Heart right ventricle (tissue), 16 donors: ENCODE measurements at regions of chr10 and their contacts with region 1.

Region 1: GRCh38 chr10:71314028-71314693 is 4.9 kb upstream of the SLC29A3 start:
- DNase-seq: peak; percentile 48 to 51
- ATAC-seq: peak in 7 of 8 donors; percentile 48 to 77 (median 63)
- H3K4me3 ChIP-seq: peak overlapping the region in 3 of 10 donors; percentile 12 to 24 (median 17)
- H3K27ac ChIP-seq: peak overlapping the region in 1 of 10 donors; percentile 36
- H3K4me1 ChIP-seq: peaks cover 3 to 35% (median 25%) of the 10 kb centered on the region in 9 donors
- H3K27me3 ChIP-seq: no peaks in the 10 kb centered on the region
- CTCF ChIP-seq: peak; percentile 75 to 92 (median 89)

Region 2: GRCh38 chr10:71378336-71379117 is 64.4 kb after region 1 on chr10:
- intact Hi-C with region 1: loop called in 4 of 10 experiments (anchors 1 to 5 kb)
- DNase-seq: no peak
- ATAC-seq: no peak
- H3K4me3 ChIP-seq: no peak overlapping the region
- H3K27ac ChIP-seq: peak overlapping the region in 2 of 10 donors; percentile 64 to 90
- H3K4me1 ChIP-seq: peaks cover 0 to 37% (median 7%) of the 10 kb centered on the region in 9 donors
- H3K27me3 ChIP-seq: peaks cover 0 to 3% (median 0%) of the 10 kb centered on the region in 7 donors
- CTCF ChIP-seq: no peak

Region 3: DNA sequence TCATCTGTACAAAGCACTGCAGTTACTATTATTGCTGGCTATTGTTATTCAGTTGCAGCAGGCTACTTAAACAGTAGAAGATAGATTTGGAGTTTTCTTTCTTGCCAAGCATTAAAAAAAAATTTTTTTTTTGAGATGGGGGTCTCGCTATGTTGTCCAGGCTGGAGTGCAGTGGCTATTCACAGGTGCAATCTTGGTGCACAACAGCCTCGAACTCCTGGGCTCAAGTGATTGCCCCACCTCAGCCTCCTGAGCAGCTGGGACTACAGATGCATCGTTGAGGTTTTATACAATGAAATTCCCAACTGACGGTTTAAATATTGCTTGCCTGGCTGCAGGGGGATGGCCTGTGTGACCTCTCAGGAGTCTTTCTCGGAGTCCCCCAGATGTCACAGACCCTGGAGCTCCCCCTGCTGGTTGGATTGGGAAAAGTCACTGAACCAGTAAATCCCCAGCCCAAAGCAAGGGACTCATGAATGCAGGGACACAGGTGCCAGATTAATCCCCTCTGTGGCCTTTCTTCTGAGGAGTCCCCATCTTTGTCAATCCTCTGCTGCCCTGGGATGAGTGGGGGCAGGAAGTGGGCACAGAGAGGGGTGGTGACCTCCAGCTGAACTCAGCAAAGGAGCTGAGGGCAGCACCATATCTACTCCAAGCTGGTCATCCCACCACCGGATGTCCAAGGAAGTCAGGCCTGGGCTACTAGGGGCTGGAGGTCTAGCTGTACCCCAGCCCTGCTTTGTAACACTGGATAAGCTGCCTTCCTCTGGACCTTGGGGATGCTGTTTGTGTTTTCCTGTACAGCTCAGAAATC is 255.8 kb after region 1 on chr10:
- intact Hi-C with region 1: loop called in 7 of 10 experiments (anchors 2 to 10 kb)
- DNase-seq: peak; percentile 58 to 77
- ATAC-seq: peak in 7 of 8 donors; percentile 44 to 73 (median 68)
- H3K4me3 ChIP-seq: no peak overlapping the region
- H3K27ac ChIP-seq: no peak overlapping the region
- H3K4me1 ChIP-seq: no peaks in the 10 kb centered on the region
- H3K27me3 ChIP-seq: no peaks in the 10 kb centered on the region
- CTCF ChIP-seq: peak; percentile 74 to 89 (median 87)

Region 4: DNA sequence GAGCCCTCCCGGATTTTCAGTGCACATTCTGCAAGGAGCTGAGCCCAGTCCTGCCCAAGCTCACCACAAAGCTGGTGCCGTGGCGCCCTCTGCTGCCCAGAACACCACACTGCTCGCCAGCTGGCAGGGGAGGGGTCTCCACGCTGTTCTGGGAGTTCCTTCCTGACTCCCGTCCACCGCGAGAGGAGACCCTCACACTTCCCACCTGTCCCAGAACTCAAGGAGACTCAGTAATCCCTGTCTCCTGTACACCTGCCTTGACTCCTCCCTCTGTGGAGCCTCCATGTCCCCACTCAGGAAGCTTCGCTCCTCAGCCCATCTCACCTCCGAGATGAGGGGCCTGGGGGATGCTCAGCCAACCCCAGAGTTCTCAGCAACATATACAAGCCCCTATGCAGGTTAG is 394.1 kb after region 1 on chr10:
- intact Hi-C with region 1: loop called (anchors 5 to 10 kb)
- DNase-seq: peak; percentile 50 to 71
- ATAC-seq: peak; percentile 32 to 57 (median 42)
- H3K4me3 ChIP-seq: no peak overlapping the region
- H3K27ac ChIP-seq: no peak overlapping the region
- H3K4me1 ChIP-seq: peaks cover 3 to 33% (median 28%) of the 10 kb centered on the region in 9 donors
- H3K27me3 ChIP-seq: no peaks in the 10 kb centered on the region
- CTCF ChIP-seq: peak; percentile 64 to 96 (median 90)

Region 5: GRCh38 chr10:71812016-71812912 is 498.1 kb after region 1 on chr10:
- intact Hi-C with region 1: loop called in 7 of 10 experiments (anchors 5 to 10 kb)
- DNase-seq: peak; percentile 54 to 81
- ATAC-seq: peak; percentile 77 to 87 (median 84)
- H3K4me3 ChIP-seq: no peak overlapping the region
- H3K27ac ChIP-seq: no peak overlapping the region
- H3K4me1 ChIP-seq: peaks cover 5 to 34% (median 14%) of the 10 kb centered on the region in 9 donors
- H3K27me3 ChIP-seq: peaks cover 0 to 14% (median 0%) of the 10 kb centered on the region in 7 donors
- CTCF ChIP-seq: peak; percentile 63 to 93 (median 82)